Activated T-helper 2 cell treated with anti-CD3 and anti-CD28 coated beads, Interferon-gamma antibody, Interleukin-2, Interleukin-4, amounts not matched to agents 10 μg/mL and 5 μg/mL and 100 μg/mL, durations not matched to agents 14 hours and 24 hours and 36 hours (primary cell): ENCODE measurements at regions of chr14 and their contacts with region 1.

Region 1: GRCh38 chr14:22737052-22737451 is 29.4 kb upstream of the OXA1L start:
- DNase-seq: peak; percentile 41
- H3K4me3 Mint-ChIP-seq: no peak overlapping the region
- H3K27ac Mint-ChIP-seq: peak overlapping the region; percentile 92
- H3K4me1 Mint-ChIP-seq: peaks cover 21% of the 10 kb centered on the region
- H3K27me3 Mint-ChIP-seq: peaks cover 4% of the 10 kb centered on the region

Region 2: DNA sequence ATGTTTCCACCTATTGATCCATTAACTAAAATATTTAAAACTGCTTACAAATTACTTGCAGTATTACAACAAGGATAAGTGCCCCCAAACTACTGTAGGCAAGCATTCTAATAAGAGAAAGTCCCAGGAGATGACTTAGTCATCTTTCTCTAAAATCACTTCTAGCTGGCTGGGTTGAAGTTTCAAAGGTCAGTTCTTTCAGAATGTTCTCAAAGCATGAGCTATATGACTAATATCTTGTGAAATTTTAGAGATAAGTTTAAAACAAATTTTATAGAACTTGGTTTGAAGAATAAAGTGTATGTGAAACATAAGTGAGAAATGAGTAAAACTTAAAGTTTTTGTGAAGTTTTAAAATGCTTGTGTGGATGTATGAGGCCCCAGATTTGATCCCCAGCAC is 68.6 kb before region 1 on chr14:
- intact Hi-C with region 1: loop called (anchors 1 kb)
- DNase-seq: no peak
- H3K4me3 Mint-ChIP-seq: no peak overlapping the region
- H3K27ac Mint-ChIP-seq: peak overlapping the region; percentile 68
- H3K4me1 Mint-ChIP-seq: peaks cover 24% of the 10 kb centered on the region
- H3K27me3 Mint-ChIP-seq: peaks cover 3% of the 10 kb centered on the region

Region 3: DNA sequence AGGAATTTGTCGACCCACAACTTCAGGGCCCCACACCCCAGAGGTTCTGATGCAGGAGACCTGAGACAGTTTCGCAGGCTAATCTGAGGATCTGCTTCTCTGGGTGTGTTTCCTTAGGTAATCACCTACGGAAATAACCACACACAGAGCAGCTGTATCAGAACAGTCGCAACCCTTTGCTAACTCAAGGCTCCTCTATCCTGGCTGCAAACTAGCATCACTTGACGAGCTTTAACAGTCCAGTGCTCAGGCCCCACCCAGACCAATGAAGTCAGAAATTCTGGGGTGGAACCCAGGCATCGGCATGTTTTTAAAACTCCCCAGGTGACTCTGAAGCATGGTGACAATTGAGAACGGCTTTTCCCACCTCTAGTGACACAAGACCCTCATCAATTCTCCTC is 57.5 kb after region 1 on chr14:
- intact Hi-C with region 1: loop called (anchors 2 kb)
- DNase-seq: no peak
- H3K4me3 Mint-ChIP-seq: no peak overlapping the region
- H3K27ac Mint-ChIP-seq: no peak overlapping the region
- H3K4me1 Mint-ChIP-seq: peaks cover 5% of the 10 kb centered on the region
- H3K27me3 Mint-ChIP-seq: peaks cover 20% of the 10 kb centered on the region